ENCODE measurements at regions of chr4 and their contacts with region 1.

Region 1: DNA sequence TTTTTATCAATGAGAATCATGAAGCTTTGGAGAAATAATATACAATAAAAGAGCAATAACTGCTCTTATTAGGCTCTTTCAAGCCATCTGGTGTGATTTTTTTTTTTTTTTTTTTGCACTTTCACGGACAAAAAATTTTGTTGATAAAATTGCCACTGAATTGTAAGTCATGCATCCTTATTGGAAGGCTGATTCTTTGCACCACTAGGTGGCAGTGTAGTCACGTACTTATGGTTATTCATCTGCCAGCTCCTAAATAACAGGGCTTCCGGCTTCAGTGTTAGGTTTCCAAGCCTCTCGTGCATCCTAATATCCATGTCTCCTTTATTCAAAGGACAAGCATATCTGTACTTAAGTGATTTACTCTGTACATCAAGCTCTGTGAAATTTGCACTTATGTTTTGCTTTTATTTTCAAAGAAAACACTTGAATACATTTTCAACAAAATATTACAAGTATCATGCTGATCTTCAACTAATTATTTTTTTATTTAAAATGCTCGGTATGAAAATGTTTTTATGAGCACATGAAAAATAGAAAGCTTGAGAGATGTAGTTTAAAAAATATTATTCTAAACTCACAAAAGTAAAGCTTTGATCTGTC is 1578.3 kb upstream of the TENM3 start:
- DNase-seq: peak; percentile 79
- ATAC-seq: peak; percentile 64
- H3K4me3 Mint-ChIP-seq: no peak overlapping the region
- H3K27ac Mint-ChIP-seq: no peak overlapping the region
- H3K4me1 Mint-ChIP-seq: no peaks in the 10 kb centered on the region
- H3K27me3 Mint-ChIP-seq: peaks cover 3% of the 10 kb centered on the region
- CTCF ChIP-seq: peak; percentile 63

Region 2: GRCh38 chr4:180675359-180675650 is 10.4 kb after region 1 on chr4:
- CTCF ChIA-PET with region 1: interaction called, 25 read pairs
- POLR2A ChIA-PET with region 1: no interaction called
- intact Hi-C with region 1: no loop called
- DNase-seq: no peak
- ATAC-seq: no peak
- H3K4me3 Mint-ChIP-seq: no peak overlapping the region
- H3K27ac Mint-ChIP-seq: no peak overlapping the region
- H3K4me1 Mint-ChIP-seq: no peaks in the 10 kb centered on the region
- H3K27me3 Mint-ChIP-seq: peaks cover 3% of the 10 kb centered on the region
- CTCF ChIP-seq: no peak